ENCODE measurements at regions of chr2 and their contacts with region 1.

Region 1: GRCh38 chr2:99507937-99508818 is 18.4 kb upstream of the REV1 start:
- DNase-seq: no peak
- H3K4me3 ChIP-seq: no peak overlapping the region
- H3K27ac ChIP-seq: no peak overlapping the region
- H3K4me1 ChIP-seq: no peaks in the 10 kb centered on the region
- H3K27me3 ChIP-seq: peaks cover 2% of the 10 kb centered on the region
- CTCF ChIP-seq: no peak

Region 2: GRCh38 chr2:99421469-99421868 is 86.7 kb before region 1 on chr2:
- CTCF ChIA-PET with region 1: no interaction called
- POLR2A ChIA-PET with region 1: no interaction called
- intact Hi-C with region 1: no loop called
- DNase-seq: no peak
- H3K4me3 ChIP-seq: no peak overlapping the region
- H3K27ac ChIP-seq: no peak overlapping the region
- H3K4me1 ChIP-seq: no peaks in the 10 kb centered on the region
- H3K27me3 ChIP-seq: no peaks in the 10 kb centered on the region
- CTCF ChIP-seq: no peak

Region 3: DNA sequence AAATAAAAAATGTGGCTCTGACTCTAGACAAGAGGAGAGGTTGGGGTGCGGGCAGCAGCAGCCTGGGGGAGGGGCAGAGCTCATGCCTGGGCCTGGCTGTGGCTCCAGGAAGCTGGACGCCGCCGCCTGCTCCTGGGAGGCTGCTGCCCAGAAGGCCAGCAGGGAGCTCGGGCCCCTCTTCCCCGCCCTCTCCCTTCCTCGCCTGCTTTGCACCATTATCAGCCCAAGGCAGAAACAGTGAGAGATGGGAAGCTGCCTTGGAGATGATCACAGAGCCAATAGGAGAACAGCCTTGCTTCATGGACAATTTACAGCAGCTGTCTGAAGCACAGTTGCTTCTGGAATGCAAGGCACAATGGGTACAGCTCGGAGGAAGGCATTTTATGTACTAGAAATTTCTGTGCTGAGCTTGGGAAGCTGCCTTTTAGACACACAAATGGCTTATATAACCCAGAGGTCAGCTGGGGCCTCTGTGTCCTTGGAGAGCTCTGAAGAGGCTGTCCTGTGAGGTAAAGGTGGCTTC is 689.5 kb after region 1 on chr2:
- CTCF ChIA-PET with region 1: no interaction called
- POLR2A ChIA-PET with region 1: interaction called, 22 read pairs
- intact Hi-C with region 1: no loop called
- DNase-seq: peak; percentile 3
- H3K4me3 ChIP-seq: no peak overlapping the region
- H3K27ac ChIP-seq: no peak overlapping the region
- H3K4me1 ChIP-seq: no peaks in the 10 kb centered on the region
- H3K27me3 ChIP-seq: peaks cover 7% of the 10 kb centered on the region
- CTCF ChIP-seq: no peak

Measured in A673 (cell line).